ENCODE measurements at regions of chr5 and their contacts with region 1.

Region 1: DNA sequence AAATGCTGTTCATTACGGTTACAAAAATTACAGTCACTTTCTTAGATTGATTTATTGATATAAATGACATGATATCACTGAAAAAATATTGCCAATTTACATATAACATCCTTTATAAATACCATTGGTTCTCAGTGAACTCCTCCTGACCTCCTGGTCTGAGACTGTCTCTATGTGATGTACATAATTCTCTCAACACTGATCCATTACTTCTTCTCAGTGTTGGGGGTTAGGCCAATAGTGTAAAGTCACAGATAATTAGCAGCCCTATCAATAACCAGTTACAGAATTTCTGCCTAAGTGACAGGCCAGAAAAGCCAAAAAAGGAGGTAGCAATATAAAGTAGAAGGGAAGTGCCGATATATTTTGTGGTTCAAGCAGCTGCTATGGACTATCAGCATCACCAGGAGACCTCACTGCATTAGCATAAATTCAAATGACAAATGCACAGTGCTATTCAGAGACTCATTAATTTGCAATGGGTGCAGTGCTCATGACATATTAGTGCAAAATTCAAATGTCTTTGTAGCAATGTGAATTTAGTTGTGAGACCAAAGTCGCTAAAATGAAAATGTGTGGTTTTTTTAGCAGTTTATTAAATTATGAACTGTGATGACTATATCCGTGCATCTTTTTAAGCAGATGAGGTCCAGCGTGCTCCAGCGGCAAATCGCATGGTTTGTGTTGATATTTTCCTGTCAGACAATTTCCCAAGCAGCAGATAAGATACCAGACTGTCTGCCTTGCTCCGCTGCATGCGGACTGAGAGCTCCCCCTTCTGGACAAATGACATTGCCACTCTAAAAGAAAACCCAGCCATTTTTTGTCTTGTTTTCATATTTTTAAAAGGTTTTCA is 144.6 kb downstream of the CETN3 start:
- DNase-seq: peak; percentile 82
- ATAC-seq: peak; percentile 84
- H3K4me3 ChIP-seq: no peak overlapping the region
- H3K27ac ChIP-seq: no peak overlapping the region
- H3K4me1 ChIP-seq: no peaks in the 10 kb centered on the region
- H3K27me3 ChIP-seq: no peaks in the 10 kb centered on the region
- CTCF ChIP-seq: peak; percentile 99

Region 2: GRCh38 chr5:88883059-88883835 is 1381.7 kb before region 1 on chr5 and contains the start of gene MEF2C:
- CTCF ChIA-PET with region 1: no interaction called
- POLR2A ChIA-PET with region 1: no interaction called
- intact Hi-C with region 1: loop called (anchors 10 kb)
- DNase-seq: peak; percentile 83
- ATAC-seq: peak; percentile 64
- H3K4me3 ChIP-seq: peak within 1 kb of the TSS; percentile 85
- H3K27ac ChIP-seq: peak within 1 kb of the TSS; percentile 56
- H3K4me1 ChIP-seq: peaks cover 38% of the 10 kb centered on the region
- H3K27me3 ChIP-seq: no peaks in the 10 kb centered on the region
- CTCF ChIP-seq: no peak
- total RNA-seq, gene MEF2C: 4.4 and 8.0 TPM in 2 replicates

Region 3: GRCh38 chr5:89729623-89730301 is 535.2 kb before region 1 on chr5:
- CTCF ChIA-PET with region 1: no interaction called
- POLR2A ChIA-PET with region 1: no interaction called
- intact Hi-C with region 1: loop called (anchors 2 kb)
- DNase-seq: peak; percentile 73
- ATAC-seq: peak; percentile 88
- H3K4me3 ChIP-seq: no peak overlapping the region
- H3K27ac ChIP-seq: no peak overlapping the region
- H3K4me1 ChIP-seq: 0 out of 2 replicates have a peak, but pooled peaks cover 4% of the 10 kb centered on the region
- H3K27me3 ChIP-seq: no peaks in the 10 kb centered on the region
- CTCF ChIP-seq: peak; percentile 80

Region 4: DNA sequence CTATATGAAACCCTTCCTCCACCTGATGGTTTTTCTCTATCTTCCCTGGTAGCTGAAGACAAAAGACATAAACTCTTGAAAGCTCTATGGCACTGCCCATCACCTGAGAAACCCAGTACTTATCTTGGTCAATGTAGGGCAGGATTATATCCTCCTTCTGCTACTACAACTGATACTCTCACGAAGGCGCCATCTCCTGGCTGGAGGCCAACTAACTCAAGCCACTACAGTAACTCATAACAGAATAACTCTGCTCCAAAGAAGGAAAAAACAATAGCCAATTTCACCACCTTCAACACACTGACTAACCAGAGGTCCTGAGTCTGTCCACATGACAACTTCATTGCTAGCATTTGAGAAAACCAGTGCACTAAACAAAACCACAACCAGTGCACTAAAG is 264.6 kb before region 1 on chr5:
- CTCF ChIA-PET with region 1: no interaction called
- POLR2A ChIA-PET with region 1: no interaction called
- intact Hi-C with region 1: loop called (anchors 10 kb)
- DNase-seq: no peak
- ATAC-seq: no peak
- H3K4me3 ChIP-seq: no peak overlapping the region
- H3K27ac ChIP-seq: no peak overlapping the region
- H3K4me1 ChIP-seq: no peaks in the 10 kb centered on the region
- H3K27me3 ChIP-seq: no peaks in the 10 kb centered on the region
- CTCF ChIP-seq: no peak

Region 5: GRCh38 chr5:90050103-90050502 is 214.8 kb before region 1 on chr5:
- CTCF ChIA-PET with region 1: no interaction called
- POLR2A ChIA-PET with region 1: no interaction called
- intact Hi-C with region 1: no loop called
- DNase-seq: no peak
- ATAC-seq: no peak
- H3K4me3 ChIP-seq: no peak overlapping the region
- H3K27ac ChIP-seq: no peak overlapping the region
- H3K4me1 ChIP-seq: peaks cover 12% of the 10 kb centered on the region
- H3K27me3 ChIP-seq: no peaks in the 10 kb centered on the region
- CTCF ChIP-seq: no peak

Region 6: DNA sequence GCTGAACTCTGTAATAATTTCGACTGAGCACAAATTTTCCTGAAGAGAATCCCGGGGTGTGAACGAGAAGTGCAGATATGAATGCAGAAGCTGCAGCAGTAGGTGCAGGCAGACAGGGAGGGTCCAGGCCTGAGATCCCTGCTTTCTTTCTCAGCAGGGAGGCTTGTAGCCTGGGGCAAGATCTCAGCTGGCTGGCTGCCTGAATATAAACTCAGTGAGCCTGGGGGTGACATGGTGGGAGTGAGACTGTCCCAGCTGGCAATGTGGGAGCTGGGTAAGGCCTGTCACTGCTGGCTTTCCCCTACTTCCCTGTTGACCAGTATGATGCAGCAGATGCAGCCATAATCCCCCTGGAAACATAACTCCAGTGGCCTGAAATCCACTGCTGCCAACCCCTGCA is 180.6 kb before region 1 on chr5:
- CTCF ChIA-PET with region 1: no interaction called
- POLR2A ChIA-PET with region 1: no interaction called
- intact Hi-C with region 1: no loop called
- DNase-seq: no peak
- ATAC-seq: no peak
- H3K4me3 ChIP-seq: no peak overlapping the region
- H3K27ac ChIP-seq: no peak overlapping the region
- H3K4me1 ChIP-seq: no peaks in the 10 kb centered on the region
- H3K27me3 ChIP-seq: no peaks in the 10 kb centered on the region
- CTCF ChIP-seq: no peak

Region 7: GRCh38 chr5:90193185-90193822 is 71.6 kb before region 1 on chr5:
- CTCF ChIA-PET with region 1: no interaction called
- POLR2A ChIA-PET with region 1: no interaction called
- intact Hi-C with region 1: loop called (anchors 1 kb)
- DNase-seq: peak; percentile 33
- ATAC-seq: peak; percentile 43
- H3K4me3 ChIP-seq: no peak overlapping the region
- H3K27ac ChIP-seq: no peak overlapping the region
- H3K4me1 ChIP-seq: no peaks in the 10 kb centered on the region
- H3K27me3 ChIP-seq: no peaks in the 10 kb centered on the region
- CTCF ChIP-seq: 0 out of 2 replicates have a peak, but pooled peaks have one; percentile 18

Region 8: DNA sequence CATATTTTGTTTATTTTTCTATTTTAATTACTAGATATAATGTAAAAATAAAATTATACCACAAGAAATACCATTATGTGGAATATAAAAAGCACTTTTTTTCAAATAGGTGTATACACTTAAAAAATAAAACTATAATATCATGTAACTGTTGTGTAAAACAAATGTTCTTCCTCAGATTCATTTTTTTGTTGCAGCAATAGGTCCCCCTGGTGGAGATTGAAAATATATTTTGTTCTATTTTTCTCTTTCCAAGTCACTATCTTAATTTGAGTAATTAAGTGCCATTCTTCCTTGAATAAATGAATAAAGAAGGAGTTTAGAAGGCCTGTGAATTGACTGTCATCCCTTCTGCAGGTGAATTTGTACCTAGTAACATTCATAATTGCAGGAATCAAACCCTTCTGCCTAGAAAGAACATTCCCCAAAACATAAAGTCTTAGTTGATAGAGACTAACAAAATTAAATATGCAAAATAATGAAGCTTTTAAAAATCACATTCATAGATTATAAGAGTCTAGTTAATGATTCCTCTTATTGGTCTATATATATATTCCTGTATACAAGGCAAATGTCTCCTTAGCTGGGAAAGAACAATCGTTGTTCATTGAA is 121.3 kb after region 1 on chr5:
- CTCF ChIA-PET with region 1: interaction called, 4 read pairs
- POLR2A ChIA-PET with region 1: no interaction called
- intact Hi-C with region 1: loop called (anchors 1 kb)
- DNase-seq: peak; percentile 70
- ATAC-seq: no peak; the same call in 1 of the 2 replicates
- H3K4me3 ChIP-seq: no peak overlapping the region
- H3K27ac ChIP-seq: no peak overlapping the region
- H3K4me1 ChIP-seq: peaks cover 9% of the 10 kb centered on the region
- H3K27me3 ChIP-seq: no peaks in the 10 kb centered on the region
- CTCF ChIP-seq: peak; percentile 72